ENCODE measurements at regions of chr4 and their contacts with region 1.

Region 1: DNA sequence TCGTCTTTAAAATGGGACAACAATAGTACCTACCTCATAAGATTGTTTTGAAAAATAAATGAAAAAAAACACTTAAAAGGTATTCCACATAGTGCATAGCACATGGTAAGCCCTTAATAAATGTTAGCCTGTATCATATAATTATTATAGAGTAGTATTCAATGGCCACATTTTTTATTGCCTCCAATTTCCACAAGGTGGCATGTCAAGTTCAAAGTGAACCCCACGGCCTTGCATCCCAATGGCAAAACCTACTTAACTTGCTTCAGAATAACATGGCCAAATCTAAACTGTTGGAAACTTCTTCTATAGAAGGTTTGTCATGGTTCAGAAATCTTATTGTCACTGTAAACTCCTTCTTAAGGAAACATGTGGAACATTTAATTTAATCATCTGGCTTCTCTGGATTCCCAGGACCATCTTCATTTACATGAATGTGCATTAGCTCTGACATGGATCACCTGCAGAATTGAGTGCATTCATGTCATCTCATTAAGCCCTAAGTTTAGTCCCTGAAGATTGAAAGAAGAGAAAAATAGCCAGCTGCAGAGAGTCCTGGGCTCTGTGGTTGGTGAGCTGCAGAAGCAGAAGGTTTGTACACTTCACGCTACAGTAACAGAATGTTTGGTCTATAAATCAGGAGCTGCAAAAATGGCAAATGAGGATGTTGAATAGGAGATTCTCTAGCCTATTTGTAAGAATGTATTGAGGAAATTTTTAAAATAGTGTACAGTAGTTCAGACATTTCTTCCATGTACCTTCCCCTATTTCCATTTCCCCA is 61.0 kb downstream of the ANXA3 start:
- DNase-seq: peak in 1 of 2 donors; percentile 34
- ATAC-seq: peak; percentile 26 to 83 (median 68)
- H3K4me3 ChIP-seq: no peak overlapping the region
- H3K27ac ChIP-seq: no peak overlapping the region
- H3K4me1 ChIP-seq: peaks cover 0 to 37% (median 13%) of the 10 kb centered on the region in 9 donors
- H3K27me3 ChIP-seq: no peaks in the 10 kb centered on the region
- CTCF ChIP-seq: peak; percentile 32 to 78 (median 66)

Region 2: GRCh38 chr4:78864405-78865024 is 251.9 kb after region 1 on chr4:
- intact Hi-C with region 1: loop called (anchors 2 to 10 kb)
- DNase-seq: peak in 1 of 2 donors; percentile 54
- ATAC-seq: peak in 6 of 8 donors; percentile 47 to 68 (median 61)
- H3K4me3 ChIP-seq: no peak overlapping the region
- H3K27ac ChIP-seq: no peak overlapping the region
- H3K4me1 ChIP-seq: peaks cover 0 to 6% (median 0%) of the 10 kb centered on the region in 9 donors
- H3K27me3 ChIP-seq: no peaks in the 10 kb centered on the region
- CTCF ChIP-seq: peak; percentile 46 to 93 (median 85)

Measured in heart right ventricle (tissue), 16 donors.